Tibial artery (tissue), 4 donors: ENCODE measurements at regions of chr10 and their contacts with region 1.

Region 1: DNA sequence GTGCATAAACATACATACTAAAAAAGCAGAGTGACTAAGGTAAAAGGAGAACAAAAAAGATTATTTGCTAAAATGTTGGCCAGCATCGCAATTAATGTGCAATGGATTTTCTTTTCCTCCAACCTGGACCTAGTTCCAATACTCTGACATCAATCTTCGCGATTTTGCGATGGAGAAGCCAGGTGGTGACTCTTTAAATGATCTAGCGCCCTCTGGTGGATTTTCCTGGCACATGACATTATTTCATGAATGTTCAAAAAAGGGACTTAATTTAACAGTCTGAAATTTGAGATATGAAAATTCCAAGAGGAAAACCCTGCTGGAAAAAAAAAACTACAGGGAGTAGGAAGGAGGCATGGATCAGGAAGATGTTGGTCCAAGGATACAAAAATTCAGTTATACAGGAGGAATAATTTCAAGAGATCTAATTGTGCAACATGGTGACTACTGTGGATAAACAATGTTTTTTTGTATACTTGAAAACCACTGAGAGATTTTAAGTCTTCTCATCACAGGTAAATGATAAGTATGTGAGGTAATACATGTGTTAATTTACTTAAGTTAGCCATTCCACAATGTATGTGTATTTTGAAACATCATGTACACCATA is 4.3 kb upstream of the KCNMA1 start:
- DNase-seq: peak in 1 of 2 donors; percentile 82
- H3K4me3 ChIP-seq: no peak overlapping the region
- H3K27ac ChIP-seq: peak overlapping the region; percentile 88 to 94
- H3K4me1 ChIP-seq: peaks cover 0 to 38% (median 34%) of the 10 kb centered on the region in 4 donors
- H3K27me3 ChIP-seq: no peaks in the 10 kb centered on the region
- CTCF ChIP-seq: peak; percentile 79 to 94

Region 2: GRCh38 chr10:77173615-77174461 is 468.1 kb before region 1 on chr10:
- intact Hi-C with region 1: loop called (anchors 2 kb)
- DNase-seq: peak; percentile 76 to 86
- H3K4me3 ChIP-seq: no peak overlapping the region
- H3K27ac ChIP-seq: peak overlapping the region; percentile 46 to 54
- H3K4me1 ChIP-seq: peaks cover 0 to 34% (median 15%) of the 10 kb centered on the region in 4 donors
- H3K27me3 ChIP-seq: no peaks in the 10 kb centered on the region
- CTCF ChIP-seq: peak; percentile 90 to 94

Region 3: DNA sequence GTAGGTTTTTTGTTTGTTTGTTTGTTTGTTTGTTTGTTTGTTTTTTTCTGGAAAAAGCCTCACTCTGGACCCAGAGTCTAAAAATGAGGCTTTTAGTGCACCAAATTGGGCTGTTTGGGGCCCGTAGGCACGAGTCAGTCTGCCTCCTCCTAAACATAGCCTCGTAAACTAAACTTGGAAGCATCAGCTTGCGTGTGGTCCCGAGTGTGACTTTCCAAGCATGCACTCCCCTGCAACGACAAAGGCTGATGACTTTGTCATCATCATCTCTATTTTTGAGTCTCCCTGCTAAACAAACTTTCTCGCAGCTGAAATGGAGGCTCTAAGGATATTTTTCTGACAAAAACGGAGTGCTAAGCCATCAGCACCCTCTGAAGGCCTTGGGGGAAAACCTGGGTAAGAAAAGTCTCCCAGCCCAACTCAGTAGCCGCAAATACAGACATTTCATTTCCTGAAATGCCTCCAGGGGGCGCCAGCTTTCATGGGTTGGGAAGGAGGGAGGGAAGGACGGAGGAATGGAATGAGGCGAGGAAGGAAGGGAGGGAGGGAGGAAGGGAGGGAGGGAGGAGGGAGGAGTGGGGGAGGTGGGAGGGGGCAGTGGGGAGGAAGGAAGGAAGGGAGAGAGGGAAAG is 250.2 kb before region 1 on chr10:
- intact Hi-C with region 1: loop called (anchors 2 kb)
- DNase-seq: peak; percentile 87 to 93
- H3K4me3 ChIP-seq: no peak overlapping the region
- H3K27ac ChIP-seq: peak overlapping the region; percentile 82 to 91
- H3K4me1 ChIP-seq: peaks cover 5 to 77% (median 68%) of the 10 kb centered on the region in 4 donors
- H3K27me3 ChIP-seq: no peaks in the 10 kb centered on the region
- CTCF ChIP-seq: peak; percentile 56 to 78

Region 4: GRCh38 chr10:77428691-77429395 is 213.1 kb before region 1 on chr10:
- intact Hi-C with region 1: loop called (anchors 10 kb)
- DNase-seq: peak; percentile 70 to 80
- H3K4me3 ChIP-seq: no peak overlapping the region
- H3K27ac ChIP-seq: peak overlapping the region; percentile 28 to 44
- H3K4me1 ChIP-seq: peaks cover 0 to 83% (median 35%) of the 10 kb centered on the region in 4 donors
- H3K27me3 ChIP-seq: no peaks in the 10 kb centered on the region
- CTCF ChIP-seq: peak; percentile 61 to 62

Region 5: DNA sequence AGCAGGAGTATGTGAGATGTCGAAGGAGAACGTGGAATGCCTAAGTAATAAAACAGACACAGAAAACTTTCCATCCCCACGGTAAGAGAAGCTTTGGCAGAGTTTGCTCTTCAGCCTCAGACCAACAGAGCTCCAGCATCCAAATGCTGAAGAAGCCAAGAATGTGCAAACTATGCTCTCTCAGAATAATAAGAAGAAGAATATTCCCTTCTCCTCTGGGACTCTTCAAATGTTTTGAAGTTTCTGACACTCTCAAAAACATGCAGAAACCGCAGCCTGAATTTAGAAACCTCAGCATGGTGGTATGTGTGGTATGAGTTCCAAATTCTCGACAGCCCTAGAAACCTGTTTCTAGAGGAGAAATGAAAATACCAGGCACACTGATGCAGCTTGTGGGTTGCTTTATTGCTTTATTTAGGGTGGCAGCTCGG is 117.6 kb before region 1 on chr10:
- intact Hi-C with region 1: loop called (anchors 10 kb)
- DNase-seq: no peak
- H3K4me3 ChIP-seq: no peak overlapping the region
- H3K27ac ChIP-seq: peak overlapping the region; percentile 21 to 60
- H3K4me1 ChIP-seq: peaks cover 0 to 74% (median 32%) of the 10 kb centered on the region in 4 donors
- H3K27me3 ChIP-seq: no peaks in the 10 kb centered on the region
- CTCF ChIP-seq: no peak

Region 6: GRCh38 chr10:77555591-77556212 is 86.2 kb before region 1 on chr10:
- intact Hi-C with region 1: loop called (anchors 10 kb)
- DNase-seq: no peak
- H3K4me3 ChIP-seq: no peak overlapping the region
- H3K27ac ChIP-seq: peak overlapping the region; percentile 79 to 84
- H3K4me1 ChIP-seq: peaks cover 0 to 99% (median 68%) of the 10 kb centered on the region in 4 donors
- H3K27me3 ChIP-seq: no peaks in the 10 kb centered on the region
- CTCF ChIP-seq: no peak

Region 7: GRCh38 chr10:77586719-77587415 is 55.0 kb before region 1 on chr10:
- intact Hi-C with region 1: loop called (anchors 5 kb)
- DNase-seq: peak; percentile 79 to 89
- H3K4me3 ChIP-seq: no peak overlapping the region
- H3K27ac ChIP-seq: peak overlapping the region; percentile 88 to 95
- H3K4me1 ChIP-seq: peaks cover 0 to 97% (median 52%) of the 10 kb centered on the region in 4 donors
- H3K27me3 ChIP-seq: no peaks in the 10 kb centered on the region
- CTCF ChIP-seq: peak in 1 of 2 experiments; percentile 14